ENCODE measurements at regions of chr1 and their contacts with region 1.

Region 1: DNA sequence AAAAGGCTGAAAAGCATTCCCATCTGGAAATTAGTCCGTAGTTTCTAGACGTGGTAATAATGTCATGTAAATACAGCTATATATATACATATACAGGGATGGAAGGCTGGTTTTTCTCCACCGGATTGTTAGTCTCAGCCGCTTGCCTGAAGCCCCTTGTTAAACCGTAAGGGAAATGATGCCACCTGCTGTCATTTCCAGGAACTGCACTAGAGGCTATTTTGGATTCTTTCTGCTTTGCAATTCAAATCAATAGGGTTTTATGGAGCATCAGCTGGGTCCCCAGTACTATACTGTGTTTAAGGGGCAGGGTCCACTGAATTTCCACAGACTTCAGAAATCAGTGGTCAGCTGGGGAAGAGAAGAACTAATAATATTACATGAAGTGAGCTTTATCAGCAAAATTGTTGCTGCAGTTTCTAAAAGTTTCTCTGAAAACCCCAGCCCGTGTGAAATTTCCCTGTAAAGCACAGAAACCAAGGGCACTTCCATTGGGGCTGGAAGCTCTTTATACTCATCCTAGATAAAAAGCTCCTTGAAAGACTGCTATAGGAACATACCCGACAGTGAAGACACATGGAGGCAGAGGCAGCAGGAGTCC is 33.8 kb upstream of the MPZL1 start:
- DNase-seq: peak; percentile 74
- H3K4me3 ChIP-seq: no peak overlapping the region
- H3K27ac ChIP-seq: peak overlapping the region; percentile 20; the same call in 1 of the 2 replicates
- H3K4me1 ChIP-seq: peaks cover 9% of the 10 kb centered on the region
- H3K27me3 ChIP-seq: no peaks in the 10 kb centered on the region

Region 2: GRCh38 chr1:167090314-167090942 is 597.6 kb before region 1 on chr1 and contains the start of gene GPA33:
- in situ Hi-C with region 1: loop called (anchors 25 kb)
- DNase-seq: no peak
- H3K4me3 ChIP-seq: no peak within 1 kb of the TSS
- H3K27ac ChIP-seq: no peak within 1 kb of the TSS
- H3K4me1 ChIP-seq: no peaks in the 10 kb centered on the region
- H3K27me3 ChIP-seq: peaks cover 4% of the 10 kb centered on the region; the same call in 1 of the 2 replicates
- total RNA-seq, gene GPA33: not detected in 2 replicates

Region 3: GRCh38 chr1:167387251-167387910 is 300.6 kb before region 1 on chr1:
- in situ Hi-C with region 1: loop called (anchors 25 kb)
- DNase-seq: no peak
- H3K4me3 ChIP-seq: no peak overlapping the region
- H3K27ac ChIP-seq: no peak overlapping the region
- H3K4me1 ChIP-seq: no peaks in the 10 kb centered on the region
- H3K27me3 ChIP-seq: no peaks in the 10 kb centered on the region

Region 4: GRCh38 chr1:167599957-167600581 is 88.0 kb before region 1 on chr1:
- in situ Hi-C with region 1: loop called (anchors 25 kb)
- DNase-seq: peak; percentile 71
- H3K4me3 ChIP-seq: no peak overlapping the region
- H3K27ac ChIP-seq: no peak overlapping the region
- H3K4me1 ChIP-seq: peaks cover 9% of the 10 kb centered on the region
- H3K27me3 ChIP-seq: no peaks in the 10 kb centered on the region

Region 5: DNA sequence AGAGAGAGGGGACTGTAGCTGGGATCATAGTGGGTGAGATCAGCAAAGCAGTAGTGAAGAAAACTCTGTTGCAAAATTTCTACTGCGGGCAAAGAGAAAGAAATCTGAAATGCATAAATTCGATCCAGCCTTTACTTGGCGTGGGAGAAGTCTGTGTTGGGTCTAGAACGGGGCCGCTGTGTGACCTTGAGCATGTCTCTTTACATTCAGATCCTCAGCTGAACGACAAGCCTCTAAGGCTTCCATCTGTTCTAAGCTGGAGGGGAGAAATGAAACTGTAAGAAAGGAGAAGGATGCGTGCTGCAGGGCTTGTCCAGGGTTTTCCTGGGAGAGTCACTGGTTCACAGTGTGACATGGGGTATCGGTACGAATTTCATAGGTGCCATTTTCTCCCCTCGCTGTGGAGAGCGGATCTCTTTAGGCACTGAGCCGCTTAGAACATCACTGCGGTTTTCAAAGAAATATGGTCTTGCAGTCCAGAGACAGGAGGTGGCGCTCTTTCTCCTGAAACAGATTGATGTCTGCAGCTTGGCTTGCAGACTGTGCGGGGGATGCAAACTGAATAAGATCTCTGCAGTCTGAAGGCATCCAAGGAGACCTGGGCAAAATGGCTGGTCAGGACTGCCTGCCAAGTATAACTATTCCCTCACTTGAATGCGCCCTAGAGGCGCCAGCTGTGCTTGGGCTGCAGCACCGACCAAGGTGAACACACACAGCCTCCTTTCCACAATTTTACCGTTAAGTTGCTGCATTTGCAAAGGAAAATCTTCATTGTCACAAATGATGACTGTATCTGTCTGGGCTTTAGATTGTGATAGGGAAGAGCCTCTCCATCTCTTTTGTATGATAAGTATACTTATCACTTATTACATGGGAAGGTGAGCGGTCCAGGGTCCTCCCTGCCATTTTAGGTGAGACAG is 751.7 kb after region 1 on chr1:
- in situ Hi-C with region 1: no loop called
- DNase-seq: peak; percentile 94
- H3K4me3 ChIP-seq: peak overlapping the region; percentile 69
- H3K27ac ChIP-seq: no peak overlapping the region
- H3K4me1 ChIP-seq: peaks cover 15% of the 10 kb centered on the region
- H3K27me3 ChIP-seq: no peaks in the 10 kb centered on the region

Measured in GM23248 (cell line).